ENCODE measurements at regions of chr19 and their contacts with region 1.

Region 1: GRCh38 chr19:907183-907853 is 5.7 kb downstream of the R3HDM4 start:
- DNase-seq: no peak
- ATAC-seq: peak in 3 of 8 donors; percentile 24 to 32 (median 30)
- H3K4me3 ChIP-seq: peak overlapping the region in 1 of 10 donors; percentile 47
- H3K27ac ChIP-seq: peak overlapping the region in 2 of 10 donors; percentile 14 to 93
- H3K4me1 ChIP-seq: peaks cover 0 to 46% (median 0%) of the 10 kb centered on the region in 9 donors
- H3K27me3 ChIP-seq: no peaks in the 10 kb centered on the region
- CTCF ChIP-seq: no peak

Region 2: GRCh38 chr19:872266-872951 is 34.9 kb before region 1 on chr19:
- intact Hi-C with region 1: loop called in 1 of 10 experiments (anchors 5 kb)
- DNase-seq: peak in 1 of 2 donors; percentile 50
- ATAC-seq: peak in 3 of 8 donors; percentile 20 to 37 (median 35)
- H3K4me3 ChIP-seq: peak overlapping the region in 1 of 10 donors; percentile 18
- H3K27ac ChIP-seq: peak overlapping the region in 2 of 10 donors; percentile 52 to 71
- H3K4me1 ChIP-seq: peaks cover 0 to 40% (median 8%) of the 10 kb centered on the region in 9 donors
- H3K27me3 ChIP-seq: no peaks in the 10 kb centered on the region
- CTCF ChIP-seq: no peak

Measured in heart right ventricle (tissue), 16 donors.